PC-3 (cell line): ENCODE measurements at regions of chr11 and their contacts with region 1.

Region 1: GRCh38 chr11:8688414-8689362 is 6.1 kb downstream of the RPL27A start:
- DNase-seq: peak; percentile 97
- ATAC-seq: peak; percentile 88
- H3K4me3 ChIP-seq: peak overlapping the region; percentile 77
- H3K27ac ChIP-seq: peak overlapping the region; percentile 75
- H3K4me1 ChIP-seq: peaks cover 52% of the 10 kb centered on the region
- H3K27me3 ChIP-seq: no peaks in the 10 kb centered on the region
- CTCF ChIP-seq: peak; percentile 42; the same call in 1 of the 2 replicates

Region 2: GRCh38 chr11:8610532-8611116 is 78.1 kb before region 1 on chr11:
- CTCF ChIA-PET with region 1: no interaction called
- POLR2A ChIA-PET with region 1: interaction called, 24 read pairs
- intact Hi-C with region 1: no loop called
- DNase-seq: no peak
- ATAC-seq: no peak
- H3K4me3 ChIP-seq: no peak overlapping the region
- H3K27ac ChIP-seq: no peak overlapping the region
- H3K4me1 ChIP-seq: no peaks in the 10 kb centered on the region
- H3K27me3 ChIP-seq: no peaks in the 10 kb centered on the region
- CTCF ChIP-seq: no peak

Region 3: GRCh38 chr11:8768625-8769333 is 80.1 kb after region 1 on chr11:
- CTCF ChIA-PET with region 1: interaction called, 14 read pairs
- POLR2A ChIA-PET with region 1: interaction called, 3 read pairs
- intact Hi-C with region 1: loop called (anchors 1 kb)
- DNase-seq: peak; percentile 79
- ATAC-seq: peak; percentile 92
- H3K4me3 ChIP-seq: no peak overlapping the region
- H3K27ac ChIP-seq: peak overlapping the region; percentile 69
- H3K4me1 ChIP-seq: peaks cover 31% of the 10 kb centered on the region
- H3K27me3 ChIP-seq: no peaks in the 10 kb centered on the region
- CTCF ChIP-seq: peak; percentile 62

Region 4: GRCh38 chr11:8779107-8779506 is 90.4 kb after region 1 on chr11:
- CTCF ChIA-PET with region 1: no interaction called
- POLR2A ChIA-PET with region 1: no interaction called
- intact Hi-C with region 1: no loop called
- DNase-seq: no peak
- ATAC-seq: no peak
- H3K4me3 ChIP-seq: no peak overlapping the region
- H3K27ac ChIP-seq: no peak overlapping the region
- H3K4me1 ChIP-seq: no peaks in the 10 kb centered on the region
- H3K27me3 ChIP-seq: no peaks in the 10 kb centered on the region
- CTCF ChIP-seq: no peak

Region 5: GRCh38 chr11:8870411-8871170 is 181.9 kb after region 1 on chr11:
- CTCF ChIA-PET with region 1: interaction called, 3 read pairs
- POLR2A ChIA-PET with region 1: interaction called, 5 read pairs
- intact Hi-C with region 1: loop called (anchors 1 kb)
- DNase-seq: peak; percentile 54
- ATAC-seq: peak; percentile 79
- H3K4me3 ChIP-seq: peak overlapping the region; percentile 81
- H3K27ac ChIP-seq: no peak overlapping the region
- H3K4me1 ChIP-seq: no peaks in the 10 kb centered on the region
- H3K27me3 ChIP-seq: no peaks in the 10 kb centered on the region
- CTCF ChIP-seq: 0 out of 2 replicates have a peak, but pooled peaks have one; percentile 15

Region 6: DNA sequence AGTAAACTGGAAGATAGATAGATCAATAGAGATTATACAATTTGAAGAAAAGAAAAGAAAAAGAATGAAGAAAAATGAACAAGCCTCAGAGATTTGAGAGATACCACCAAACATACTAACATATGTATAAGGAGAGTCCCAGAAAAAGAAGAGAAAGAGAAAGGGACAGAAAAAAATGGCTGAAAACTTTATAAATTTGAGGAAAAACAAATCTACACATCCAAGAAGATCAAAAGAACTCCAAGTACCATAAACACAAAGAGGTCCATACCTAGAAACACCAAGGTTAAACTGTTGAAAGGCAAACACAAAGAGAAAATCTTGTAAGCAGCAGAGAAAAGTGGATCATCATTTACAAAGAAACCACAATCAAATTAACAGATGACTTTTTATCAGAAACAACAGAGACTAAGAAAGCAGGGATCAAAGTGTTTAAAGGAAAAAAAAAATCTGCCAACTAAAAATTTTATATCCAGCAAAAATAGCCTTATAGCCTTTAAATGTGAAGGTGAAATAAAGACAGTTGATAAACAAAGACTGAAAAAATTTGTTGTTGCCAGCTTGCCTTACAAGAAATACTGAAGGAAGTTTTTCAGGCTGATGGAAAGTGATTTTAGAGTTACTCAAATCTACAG is 210.5 kb after region 1 on chr11:
- CTCF ChIA-PET with region 1: no interaction called
- POLR2A ChIA-PET with region 1: no interaction called
- intact Hi-C with region 1: no loop called
- DNase-seq: no peak
- ATAC-seq: no peak
- H3K4me3 ChIP-seq: no peak overlapping the region
- H3K27ac ChIP-seq: no peak overlapping the region
- H3K4me1 ChIP-seq: no peaks in the 10 kb centered on the region
- H3K27me3 ChIP-seq: no peaks in the 10 kb centered on the region
- CTCF ChIP-seq: no peak

Region 7: DNA sequence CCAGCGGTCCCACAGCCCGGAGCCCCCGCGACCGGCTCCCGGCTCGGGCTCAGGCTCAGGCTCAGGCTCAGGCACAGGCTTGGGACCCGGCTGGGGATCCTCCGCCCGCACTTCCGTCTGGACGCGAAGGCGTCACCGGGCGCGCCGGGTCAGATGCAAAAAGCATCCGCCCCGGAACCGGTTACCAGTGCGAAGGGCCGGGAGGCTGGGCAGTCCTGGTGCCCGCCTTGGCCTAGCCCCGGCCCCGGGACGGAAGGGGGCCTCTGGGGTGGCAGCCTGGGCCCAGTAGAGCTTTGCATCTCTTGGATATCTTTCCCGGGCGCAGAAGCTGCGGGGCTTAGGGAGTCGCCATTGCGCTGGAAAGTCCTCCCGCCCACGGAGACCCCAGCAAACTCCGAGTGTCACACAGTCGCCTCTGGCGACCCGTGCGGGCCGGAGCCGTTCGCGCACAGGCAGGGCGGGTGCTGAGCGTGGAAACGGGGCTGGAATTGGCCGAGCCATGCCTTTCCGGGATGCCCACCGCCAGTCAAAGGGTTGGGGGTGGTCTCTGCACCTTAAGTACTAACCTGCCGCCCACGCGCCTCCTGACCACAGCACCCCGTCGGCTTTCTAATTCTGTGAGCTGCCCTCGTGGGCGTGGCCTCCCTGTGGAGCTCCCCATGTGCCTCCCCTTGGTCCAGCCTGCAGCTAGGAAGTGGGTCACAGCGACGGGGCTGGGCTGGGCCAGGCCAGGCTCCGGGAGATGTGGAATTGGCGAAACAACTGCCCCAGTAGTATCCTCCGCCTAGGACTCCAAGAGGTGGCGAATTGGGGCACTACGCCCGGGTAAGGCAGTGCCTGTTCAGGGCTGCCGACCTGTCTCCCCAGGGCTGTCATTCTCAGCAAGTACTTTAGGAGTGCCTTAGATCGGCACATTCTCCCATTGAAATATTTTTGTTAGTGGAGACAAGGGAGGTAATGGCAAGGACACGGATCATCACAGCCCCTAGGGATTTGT is 275.9 kb after region 1 on chr11 and contains the start of gene TMEM9B:
- CTCF ChIA-PET with region 1: interaction called, 3 read pairs
- POLR2A ChIA-PET with region 1: no interaction called
- intact Hi-C with region 1: loop called (anchors 2 kb)
- DNase-seq: peak; percentile 90
- ATAC-seq: peak; percentile 87
- H3K4me3 ChIP-seq: peak within 1 kb of the TSS; percentile 93
- H3K27ac ChIP-seq: peak within 1 kb of the TSS; percentile 89
- H3K4me1 ChIP-seq: peaks cover 25% of the 10 kb centered on the region
- H3K27me3 ChIP-seq: no peaks in the 10 kb centered on the region
- CTCF ChIP-seq: no peak
- total RNA-seq, gene TMEM9B: 32.0 and 42.1 TPM in 2 replicates